Activated CD4-positive, alpha-beta memory T cell treated with anti-CD3 and anti-CD28 coated beads, Interleukin-2, amount 10 ng/mL, durations not matched to agents 7 days and 5 days (primary cell): ENCODE measurements at regions of chr6 and their contacts with region 1.

Region 1: DNA sequence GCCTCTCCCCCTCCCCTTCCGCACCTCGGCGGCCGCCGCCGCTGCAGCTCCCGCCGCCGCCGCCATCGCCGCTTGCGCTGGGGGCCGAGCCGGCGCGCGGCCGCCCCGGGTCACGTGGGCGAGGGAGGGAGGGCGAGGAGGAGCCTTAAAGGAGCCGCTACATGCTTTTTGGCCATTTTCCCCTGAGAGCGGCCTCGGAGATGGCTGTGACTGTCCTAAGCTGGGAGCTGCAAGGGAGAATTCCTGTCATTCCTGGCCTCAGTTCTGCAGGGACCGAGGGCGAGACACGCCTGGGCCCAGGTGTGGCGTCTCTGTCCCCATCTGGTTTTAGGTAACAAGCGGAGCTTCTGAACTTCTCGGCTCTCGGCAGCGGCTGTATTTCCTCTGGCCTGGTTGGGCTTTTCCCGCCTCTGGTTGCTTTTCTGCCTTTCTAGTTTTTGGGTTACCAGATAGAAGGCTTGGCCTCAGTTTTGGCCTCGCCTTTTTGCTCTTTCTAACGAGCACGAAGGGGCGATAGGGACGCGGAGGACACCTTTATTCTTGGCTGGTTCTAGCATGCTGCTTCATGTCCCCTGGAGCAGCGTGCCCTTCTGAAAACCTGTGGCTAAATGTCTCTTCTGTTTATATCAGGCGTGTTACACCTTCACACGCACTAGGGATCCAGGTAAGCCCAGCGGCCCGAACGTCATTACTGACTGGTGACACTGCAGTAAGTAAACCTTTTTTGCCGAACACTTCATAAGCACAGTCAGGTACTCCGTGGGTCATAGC is at the start of gene EHMT2:
- DNase-seq: peak; percentile 91
- H3K4me3 Mint-ChIP-seq: peak within 1 kb of the TSS; percentile 90
- H3K27ac Mint-ChIP-seq: peak within 1 kb of the TSS; percentile 84
- H3K4me1 Mint-ChIP-seq: peaks cover 49% of the 10 kb centered on the region
- H3K27me3 Mint-ChIP-seq: peaks cover 5% of the 10 kb centered on the region
- total RNA-seq, gene EHMT2: 57.0 to 58.4 TPM

Region 2: GRCh38 chr6:31834434-31835198 is 63.2 kb before region 1 on chr6:
- CTCF ChIA-PET with region 1: interaction called, 4 read pairs
- POLR2A ChIA-PET with region 1: interaction called, 11 read pairs
- DNase-seq: peak; percentile 79
- H3K4me3 Mint-ChIP-seq: peak overlapping the region; percentile 81
- H3K27ac Mint-ChIP-seq: peak overlapping the region; percentile 91
- H3K4me1 Mint-ChIP-seq: peaks cover 56% of the 10 kb centered on the region
- H3K27me3 Mint-ChIP-seq: no peaks in the 10 kb centered on the region

Region 3: GRCh38 chr6:31958741-31959739 is 61.2 kb after region 1 on chr6 and contains the starts of genes NELFE and SKIC2:
- CTCF ChIA-PET with region 1: interaction called, 4 read pairs
- POLR2A ChIA-PET with region 1: interaction called, 20 read pairs
- DNase-seq: peak; percentile 99
- H3K4me3 Mint-ChIP-seq: peak within 1 kb of the TSS; percentile 91
- H3K27ac Mint-ChIP-seq: peak within 1 kb of the TSS; percentile 96
- H3K4me1 Mint-ChIP-seq: peaks cover 45% of the 10 kb centered on the region
- H3K27me3 Mint-ChIP-seq: no peaks in the 10 kb centered on the region
- total RNA-seq, gene NELFE: 69.6 to 70.6 TPM
- total RNA-seq, gene SKIC2: 69.4 to 74.2 TPM